ENCODE measurements at regions of chr1 and their contacts with region 1.

Region 1: DNA sequence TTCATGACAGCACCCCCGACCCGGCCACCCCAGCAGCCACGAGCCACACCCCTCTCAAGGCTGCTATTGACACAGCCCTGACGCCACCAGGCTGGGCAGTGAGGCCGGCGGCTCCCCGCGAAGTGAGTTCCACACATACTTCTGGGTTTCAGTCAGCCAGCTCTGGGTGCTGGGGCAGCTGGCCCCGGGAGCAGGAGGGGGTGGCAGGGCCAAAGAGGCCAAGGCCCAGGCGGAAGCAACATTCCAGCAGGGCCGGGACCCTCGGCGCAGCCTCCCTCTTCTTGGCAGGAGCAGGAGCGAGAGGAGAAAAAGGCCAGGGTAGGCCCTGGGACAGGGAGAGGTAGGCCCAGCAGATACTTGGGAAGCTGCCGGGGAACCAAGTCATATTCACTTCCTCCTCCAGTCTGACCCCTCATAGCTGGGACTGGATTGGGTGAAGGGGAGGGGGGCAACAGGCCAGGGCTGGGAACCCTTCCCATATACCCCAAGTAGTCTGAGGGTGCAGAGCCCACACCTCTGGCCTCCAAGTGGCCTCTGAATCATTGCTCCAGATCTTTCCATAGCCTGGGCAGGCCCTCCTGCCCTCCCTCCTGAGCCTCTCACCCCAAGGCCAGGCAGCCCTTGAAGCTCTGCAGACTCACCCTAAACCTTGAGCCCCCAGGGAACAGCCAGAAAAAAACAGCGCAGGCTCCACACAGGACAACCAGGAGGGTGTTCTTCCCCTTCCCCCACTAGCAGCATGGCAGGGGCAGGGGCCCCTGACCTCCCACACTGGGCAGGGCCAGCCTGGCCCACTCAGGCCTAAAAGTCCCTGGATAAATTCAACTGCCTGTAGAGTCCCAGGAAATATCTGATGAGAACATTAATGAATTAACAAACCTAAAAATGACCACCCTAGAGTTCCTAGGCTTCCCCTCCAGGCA is 5.7 kb downstream of the HSPG2 start:
- DNase-seq: no peak
- H3K4me3 ChIP-seq: no peak overlapping the region
- H3K27ac ChIP-seq: no peak overlapping the region
- H3K4me1 ChIP-seq: peaks cover 0 to 52% (median 39%) of the 10 kb centered on the region in 4 experiments
- H3K27me3 ChIP-seq: no peaks in the 10 kb centered on the region

Region 2: DNA sequence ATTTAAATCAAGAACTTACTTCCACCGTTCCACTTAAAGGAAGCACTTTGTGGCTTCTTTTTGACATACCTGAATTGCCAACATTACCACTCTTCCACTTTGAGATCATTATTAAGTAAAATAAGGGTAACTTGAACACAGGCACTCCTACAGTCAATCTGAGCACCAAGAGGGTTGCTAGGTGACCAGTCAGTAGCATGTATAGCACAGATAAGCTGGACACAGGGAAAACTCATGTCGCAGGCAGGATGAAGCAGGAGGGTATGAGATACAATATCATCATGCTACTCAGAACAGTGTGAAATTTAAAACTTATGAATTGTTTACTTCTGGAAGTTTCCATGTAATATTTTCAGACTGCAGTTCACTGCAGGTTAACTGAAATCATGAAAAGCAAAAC is 215.3 kb before region 1 on chr1:
- CTCF ChIA-PET with region 1: no interaction called
- POLR2A ChIA-PET with region 1: no interaction called
- DNase-seq: peak in 1 of 3 donors; percentile 9
- H3K4me3 ChIP-seq: no peak overlapping the region
- H3K27ac ChIP-seq: no peak overlapping the region
- H3K4me1 ChIP-seq: peaks cover 3 to 6% (median 3%) of the 10 kb centered on the region in 4 experiments
- H3K27me3 ChIP-seq: no peaks in the 10 kb centered on the region

Region 3: GRCh38 chr1:21919520-21919919 is 11.9 kb before region 1 on chr1:
- CTCF ChIA-PET with region 1: interaction called, 10 read pairs
- POLR2A ChIA-PET with region 1: interaction called, 5 read pairs
- DNase-seq: no peak
- H3K4me3 ChIP-seq: no peak overlapping the region
- H3K27ac ChIP-seq: no peak overlapping the region
- H3K4me1 ChIP-seq: peaks cover 0 to 26% (median 18%) of the 10 kb centered on the region in 4 experiments
- H3K27me3 ChIP-seq: no peaks in the 10 kb centered on the region